ENCODE measurements at regions of chr3 and their contacts with region 1.

Region 1: DNA sequence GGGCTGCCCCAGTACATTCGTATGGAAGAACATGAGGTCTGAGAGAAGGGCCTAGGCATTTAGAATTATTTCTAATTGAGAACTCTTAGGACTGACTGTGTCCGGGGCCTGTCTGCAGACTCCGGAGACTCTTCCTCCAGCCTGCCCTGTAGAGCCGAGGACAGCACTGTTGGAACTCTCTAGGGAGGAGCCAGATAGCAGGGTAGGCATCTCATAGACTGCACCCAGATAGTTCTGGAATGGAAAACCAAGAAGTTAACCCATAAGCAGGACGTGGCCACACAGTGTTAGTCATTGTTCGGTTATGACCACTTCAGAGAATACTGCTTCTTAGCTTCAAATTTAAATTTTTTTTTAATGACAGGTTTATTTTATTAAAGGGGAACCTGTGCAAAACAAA is 59.5 kb downstream of the SNRK start:
- DNase-seq: peak; percentile 69
- ATAC-seq: peak; percentile 70
- H3K4me3 Mint-ChIP-seq: no peak overlapping the region
- H3K27ac Mint-ChIP-seq: peak overlapping the region; percentile 99
- H3K4me1 Mint-ChIP-seq: peaks cover 79% of the 10 kb centered on the region
- H3K27me3 Mint-ChIP-seq: no peaks in the 10 kb centered on the region
- CTCF ChIP-seq: no peak

Region 2: DNA sequence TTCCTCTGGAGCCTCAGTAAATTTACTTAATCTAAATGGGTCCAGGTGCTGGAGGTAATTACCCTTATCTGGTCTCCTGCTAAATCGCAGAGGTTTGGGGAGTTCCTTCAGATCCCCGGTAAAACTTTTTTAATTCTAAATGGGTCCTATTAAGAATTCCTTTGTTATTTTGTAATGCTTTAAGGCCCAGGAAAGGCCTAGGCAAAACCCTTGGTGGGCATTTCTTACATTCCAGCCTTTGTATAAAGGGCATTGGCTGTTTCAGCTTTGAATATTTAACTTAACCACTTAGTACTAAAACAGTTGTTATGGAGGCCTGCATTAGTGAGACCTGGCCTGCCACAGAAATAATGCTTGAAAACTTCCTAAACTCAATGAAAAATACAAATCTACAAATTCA is 454.8 kb before region 1 on chr3:
- CTCF ChIA-PET with region 1: no interaction called
- POLR2A ChIA-PET with region 1: no interaction called
- intact Hi-C with region 1: no loop called
- DNase-seq: no peak
- ATAC-seq: no peak
- H3K4me3 Mint-ChIP-seq: no peak overlapping the region
- H3K27ac Mint-ChIP-seq: no peak overlapping the region
- H3K4me1 Mint-ChIP-seq: peaks cover 5% of the 10 kb centered on the region
- H3K27me3 Mint-ChIP-seq: peaks cover 13% of the 10 kb centered on the region
- CTCF ChIP-seq: no peak

Region 3: GRCh38 chr3:43185656-43186314 is 160.1 kb before region 1 on chr3:
- CTCF ChIA-PET with region 1: no interaction called
- POLR2A ChIA-PET with region 1: no interaction called
- intact Hi-C with region 1: no loop called
- DNase-seq: no peak
- ATAC-seq: no peak
- H3K4me3 Mint-ChIP-seq: no peak overlapping the region
- H3K27ac Mint-ChIP-seq: no peak overlapping the region
- H3K4me1 Mint-ChIP-seq: peaks cover 19% of the 10 kb centered on the region
- H3K27me3 Mint-ChIP-seq: no peaks in the 10 kb centered on the region
- CTCF ChIP-seq: no peak

Region 4: DNA sequence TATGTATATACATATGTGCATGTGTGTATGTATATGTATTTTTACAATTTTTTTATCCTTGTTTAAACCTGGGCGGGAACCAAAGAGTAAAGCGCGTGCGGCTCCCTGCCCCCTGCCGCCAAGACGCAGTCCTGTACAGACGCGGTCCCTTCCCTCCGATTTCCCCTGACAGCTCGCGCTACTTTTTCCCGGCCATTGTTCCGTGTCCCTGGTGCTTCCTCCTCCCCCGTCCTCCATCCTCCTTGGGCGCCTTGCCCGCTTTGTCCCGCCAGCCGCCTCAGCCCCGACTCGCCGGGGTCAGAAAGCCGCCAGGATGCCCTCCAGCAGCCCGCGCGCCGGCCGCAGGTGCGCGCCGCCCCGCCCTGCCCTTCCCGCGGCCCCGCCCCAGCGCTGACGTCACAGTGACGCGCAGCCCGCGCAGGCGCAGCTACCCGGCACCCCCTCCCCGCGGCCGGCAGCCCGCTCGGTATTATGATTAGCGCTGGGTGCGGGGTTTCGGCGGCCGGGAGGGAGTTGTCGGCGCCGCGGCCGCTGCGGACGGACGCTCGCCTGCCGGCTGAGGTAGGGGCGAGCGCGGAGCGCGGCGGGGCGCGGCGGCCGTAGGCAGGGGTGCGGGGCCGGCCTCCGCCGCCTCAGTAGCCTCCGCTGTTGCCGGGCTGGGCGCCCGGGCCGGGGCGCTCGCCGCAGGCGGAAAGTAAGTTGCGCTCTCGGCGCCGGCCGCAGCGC is 59.6 kb before region 1 on chr3 and contains the start of gene SNRK:
- CTCF ChIA-PET with region 1: no interaction called
- POLR2A ChIA-PET with region 1: interaction called, 3 read pairs
- intact Hi-C with region 1: loop called (anchors 5 kb)
- DNase-seq: peak; percentile 89
- ATAC-seq: peak; percentile 83
- H3K4me3 Mint-ChIP-seq: peak within 1 kb of the TSS; percentile 92
- H3K27ac Mint-ChIP-seq: peak within 1 kb of the TSS; percentile 98
- H3K4me1 Mint-ChIP-seq: peaks cover 35% of the 10 kb centered on the region
- H3K27me3 Mint-ChIP-seq: no peaks in the 10 kb centered on the region
- CTCF ChIP-seq: peak; percentile 53
- total RNA-seq, gene SNRK: 28.9 to 29.2 TPM

Region 5: GRCh38 chr3:43334976-43335375 is 10.9 kb before region 1 on chr3:
- CTCF ChIA-PET with region 1: interaction called, 12 read pairs
- POLR2A ChIA-PET with region 1: interaction called, 5 read pairs
- intact Hi-C with region 1: no loop called
- DNase-seq: no peak
- ATAC-seq: no peak
- H3K4me3 Mint-ChIP-seq: no peak overlapping the region
- H3K27ac Mint-ChIP-seq: no peak overlapping the region
- H3K4me1 Mint-ChIP-seq: peaks cover 33% of the 10 kb centered on the region
- H3K27me3 Mint-ChIP-seq: no peaks in the 10 kb centered on the region
- CTCF ChIP-seq: no peak